Endothelial cell of umbilical vein (primary cell): ENCODE measurements at regions of chr19 and their contacts with region 1.

Region 1: DNA sequence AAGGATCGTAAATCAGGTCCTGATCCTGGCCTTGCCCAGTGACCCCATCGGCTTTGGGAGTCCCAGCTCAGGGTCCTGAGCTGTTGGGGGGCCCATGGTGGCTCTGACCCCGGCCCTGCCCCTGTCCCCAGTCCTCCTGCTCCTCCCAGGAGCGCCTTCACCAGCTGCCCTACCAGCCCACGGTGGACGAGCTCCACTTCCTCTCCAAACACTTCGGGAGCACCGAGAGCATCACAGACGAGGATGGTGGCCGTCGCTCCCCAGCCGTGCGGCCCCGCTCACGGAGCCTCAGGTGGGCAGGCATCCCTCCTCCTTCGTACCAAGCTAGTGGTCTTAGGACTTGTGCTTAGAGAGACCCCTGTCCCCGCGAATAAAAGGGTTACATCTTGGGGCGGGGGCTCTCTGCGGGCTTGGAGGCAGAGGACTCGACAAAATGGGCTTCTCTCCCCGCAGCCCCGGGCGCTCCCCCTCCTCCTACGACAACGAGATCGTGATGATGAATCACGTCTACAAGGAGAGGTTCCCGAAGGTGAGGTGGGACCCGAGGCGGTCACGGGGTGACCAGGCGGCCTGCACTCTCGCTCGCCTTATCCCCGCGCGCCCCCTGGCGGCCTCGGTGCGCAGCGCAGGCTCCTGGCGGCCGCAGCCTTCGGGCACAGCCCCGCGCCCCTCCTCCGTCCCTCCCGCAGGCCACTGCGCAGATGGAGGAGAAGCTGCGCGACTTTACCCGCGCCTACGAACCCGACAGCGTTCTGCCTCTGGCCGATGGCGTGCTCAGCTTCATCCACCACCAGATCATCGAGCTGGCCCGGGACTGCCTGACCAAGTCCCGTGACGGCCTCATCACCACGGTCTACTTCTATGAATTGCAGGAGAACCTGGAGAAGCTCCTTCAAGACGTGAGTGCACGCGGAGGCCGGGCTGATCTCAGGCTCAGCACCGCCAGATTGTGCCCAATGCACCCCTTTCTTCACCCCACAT is 9.1 kb downstream of the MAST1 start:
- DNase-seq: peak; percentile 72
- H3K4me3 ChIP-seq: no peak overlapping the region
- H3K27ac ChIP-seq: no peak overlapping the region
- H3K4me1 ChIP-seq: peaks cover 2% of the 10 kb centered on the region
- H3K27me3 ChIP-seq: no peaks in the 10 kb centered on the region
- CTCF ChIP-seq: peak; percentile 95 to 100
- POLR2A ChIP-seq: no peak

Region 2: DNA sequence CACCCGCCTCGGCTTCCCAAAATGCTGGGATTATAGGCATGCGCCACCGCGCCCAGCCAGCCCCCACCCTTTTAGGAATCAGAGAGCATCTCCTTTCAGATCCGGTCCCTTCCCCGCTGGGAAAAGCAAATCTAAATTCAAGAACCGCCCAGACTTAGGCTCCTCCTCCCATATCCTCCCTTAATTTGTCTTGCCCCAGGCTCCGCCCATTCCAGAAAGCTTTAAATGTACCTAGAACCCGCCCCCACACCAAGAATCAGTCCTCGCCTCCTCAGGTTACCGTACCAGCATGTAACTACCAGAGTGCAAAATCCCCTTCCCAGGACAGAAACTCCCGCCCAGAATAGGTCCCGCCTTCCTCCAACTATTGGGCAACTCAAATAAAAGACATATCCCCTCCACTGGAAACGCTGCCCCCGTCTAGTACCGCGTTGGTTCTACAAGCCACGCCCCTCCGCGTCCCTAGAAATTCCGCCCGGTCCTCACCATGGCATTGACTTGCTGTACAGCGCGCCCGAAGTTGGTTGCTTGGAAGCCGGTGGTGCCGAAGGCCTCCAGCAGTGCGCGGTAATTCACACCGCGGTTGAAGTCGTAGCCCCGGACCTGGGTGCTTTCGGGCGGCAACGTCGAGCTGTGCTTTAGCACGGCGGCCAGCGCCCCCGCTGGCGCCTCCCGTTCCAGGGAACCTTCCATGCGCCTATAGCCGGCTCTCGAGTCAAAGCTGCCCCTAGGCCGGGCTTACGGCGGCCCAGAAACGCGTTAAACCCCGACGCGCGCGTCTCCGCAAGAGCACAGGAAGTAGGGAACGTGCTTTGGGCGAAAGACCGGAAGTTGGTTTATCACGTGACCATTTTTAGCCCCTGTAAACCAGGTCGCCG is 166.1 kb before region 1 on chr19 and contains the start of gene DHPS:
- CTCF ChIA-PET with region 1: interaction called, 38 read pairs
- POLR2A ChIA-PET with region 1: no interaction called
- dilution Hi-C with region 1: no loop called
- intact Hi-C with region 1: loop called (anchors 1 kb)
- DNase-seq: peak; percentile 95
- H3K4me3 ChIP-seq: peak within 1 kb of the TSS; percentile 15 to 77 (median 54)
- H3K27ac ChIP-seq: peak within 1 kb of the TSS; percentile 80
- H3K4me1 ChIP-seq: no peaks in the 10 kb centered on the region
- H3K27me3 ChIP-seq: no peaks in the 10 kb centered on the region
- CTCF ChIP-seq: peak in 1 of 2 donors; percentile 18
- POLR2A ChIP-seq: peak; percentile 70
- total RNA-seq, gene DHPS: 68.4 and 77.4 TPM in 2 replicates

Region 3: DNA sequence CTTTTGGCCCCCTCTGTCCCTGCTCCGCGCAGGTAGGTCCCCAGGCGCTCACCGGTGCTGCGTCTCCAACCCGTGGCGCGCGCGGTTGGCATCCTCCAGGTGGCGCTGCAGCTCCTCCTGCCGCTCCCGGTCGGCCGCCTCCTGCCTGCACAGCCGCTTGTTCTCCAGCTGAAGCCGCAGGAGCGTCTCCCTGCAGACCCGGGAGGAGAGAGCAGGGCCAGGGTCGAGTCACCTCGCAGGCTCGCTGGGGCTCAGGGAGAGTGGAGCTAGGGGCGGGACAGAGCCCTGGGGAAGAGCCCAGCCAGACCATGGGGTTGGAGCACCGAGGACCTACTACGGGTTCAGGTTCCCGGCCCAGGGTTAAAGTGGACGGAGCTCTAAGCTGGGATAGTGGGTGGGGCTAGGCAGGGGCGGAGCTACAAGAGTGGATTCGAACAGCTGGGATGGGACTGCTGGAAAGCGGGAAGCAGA is 81.4 kb before region 1 on chr19:
- CTCF ChIA-PET with region 1: interaction called, 481 read pairs
- POLR2A ChIA-PET with region 1: interaction called, 3 read pairs
- dilution Hi-C with region 1: no loop called
- intact Hi-C with region 1: loop called (anchors 1 kb)
- DNase-seq: peak; percentile 88
- H3K4me3 ChIP-seq: peak overlapping the region in 2 of 3 experiments; percentile 34 to 44
- H3K27ac ChIP-seq: no peak overlapping the region
- H3K4me1 ChIP-seq: no peaks in the 10 kb centered on the region
- H3K27me3 ChIP-seq: no peaks in the 10 kb centered on the region
- CTCF ChIP-seq: peak; percentile 32 to 95
- POLR2A ChIP-seq: no peak

Region 4: DNA sequence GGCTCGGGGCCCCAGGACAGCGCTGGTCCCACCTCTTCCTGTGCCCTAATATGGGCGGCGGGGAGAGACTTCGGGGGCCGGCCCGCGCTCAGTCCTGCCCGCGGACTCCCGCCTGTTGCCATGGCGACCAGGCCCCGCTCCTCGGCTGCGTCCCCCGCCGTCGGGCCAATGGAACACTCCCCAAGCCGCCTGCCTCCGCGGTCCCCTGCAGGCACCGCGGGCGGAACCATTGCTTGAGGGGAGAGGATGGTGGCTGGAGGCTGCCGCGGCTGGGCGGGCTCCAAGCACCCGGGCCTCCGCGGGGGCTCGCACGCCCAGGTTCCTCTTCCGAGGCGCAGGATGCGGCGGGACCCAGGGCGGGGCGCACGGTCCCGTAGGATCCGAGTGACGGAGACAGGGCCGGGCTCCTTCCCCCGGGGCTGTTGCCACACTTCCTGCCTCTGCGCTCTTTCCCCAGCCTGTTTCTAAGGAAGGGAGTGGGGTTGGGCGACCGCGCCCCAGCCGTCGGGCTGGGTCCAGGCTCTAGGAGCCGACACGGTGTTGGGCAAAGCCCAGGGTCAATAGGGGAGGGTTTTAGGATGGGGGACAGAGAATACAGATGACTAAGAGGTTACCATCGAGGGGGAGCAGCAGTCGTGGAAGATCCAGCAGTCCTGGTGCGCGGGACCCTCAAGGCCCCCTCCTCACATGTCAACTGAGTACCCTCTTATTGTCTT is 57.4 kb before region 1 on chr19:
- CTCF ChIA-PET with region 1: interaction called, 30 read pairs
- POLR2A ChIA-PET with region 1: no interaction called
- dilution Hi-C with region 1: no loop called
- intact Hi-C with region 1: no loop called
- DNase-seq: peak; percentile 91
- H3K4me3 ChIP-seq: peak overlapping the region; percentile 16 to 44 (median 37)
- H3K27ac ChIP-seq: peak overlapping the region; percentile 65
- H3K4me1 ChIP-seq: peaks cover 35% of the 10 kb centered on the region
- H3K27me3 ChIP-seq: no peaks in the 10 kb centered on the region
- CTCF ChIP-seq: no peak
- POLR2A ChIP-seq: no peak

Region 5: DNA sequence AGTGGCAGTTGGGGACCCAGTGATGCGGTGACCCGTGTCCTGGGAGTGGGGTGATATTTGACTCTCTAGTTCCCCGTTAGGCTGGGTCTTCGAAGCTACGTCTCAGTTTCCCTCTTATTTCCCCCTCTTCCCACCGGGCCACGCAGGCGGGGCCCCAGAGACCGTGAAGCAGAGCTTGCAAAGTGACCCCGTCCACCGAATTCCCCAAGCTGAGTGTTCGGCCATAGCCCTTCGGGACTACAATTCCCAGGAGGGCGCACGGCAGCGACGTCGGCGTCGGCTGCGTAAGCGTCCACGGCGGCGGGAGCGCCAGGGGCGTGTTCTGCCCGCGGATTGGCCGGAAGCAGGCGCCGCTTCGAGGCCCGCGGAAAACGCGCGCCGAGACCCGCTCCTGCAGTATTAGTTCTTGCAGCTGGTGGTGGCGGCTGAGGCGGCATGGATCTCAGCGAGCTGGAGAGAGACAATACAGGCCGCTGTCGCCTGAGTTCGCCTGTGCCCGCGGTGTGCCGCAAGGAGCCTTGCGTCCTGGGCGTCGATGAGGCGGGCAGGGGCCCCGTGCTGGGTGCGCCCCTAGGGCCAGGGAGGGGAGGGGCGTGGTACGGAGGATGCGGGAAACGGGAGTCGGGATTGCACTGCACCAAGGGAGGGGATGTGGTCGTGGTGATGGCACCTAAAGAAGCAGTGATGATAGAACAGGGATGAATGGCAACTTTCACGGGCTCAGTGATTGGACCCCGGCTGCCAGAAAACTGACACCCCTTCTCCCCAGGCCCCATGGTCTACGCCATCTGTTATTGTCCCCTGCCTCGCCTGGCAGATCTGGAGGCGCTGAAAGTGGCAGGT is 41.0 kb before region 1 on chr19 and contains the start of gene RNASEH2A:
- CTCF ChIA-PET with region 1: interaction called, 30 read pairs
- POLR2A ChIA-PET with region 1: no interaction called
- dilution Hi-C with region 1: no loop called
- intact Hi-C with region 1: loop called (anchors 2 kb)
- DNase-seq: peak; percentile 88
- H3K4me3 ChIP-seq: peak within 1 kb of the TSS; percentile 21 to 48 (median 44)
- H3K27ac ChIP-seq: no peak within 1 kb of the TSS
- H3K4me1 ChIP-seq: peaks cover 15% of the 10 kb centered on the region
- H3K27me3 ChIP-seq: no peaks in the 10 kb centered on the region
- CTCF ChIP-seq: no peak
- POLR2A ChIP-seq: peak; percentile 73
- total RNA-seq, gene RNASEH2A: 25.6 and 28.5 TPM in 2 replicates

Region 6: DNA sequence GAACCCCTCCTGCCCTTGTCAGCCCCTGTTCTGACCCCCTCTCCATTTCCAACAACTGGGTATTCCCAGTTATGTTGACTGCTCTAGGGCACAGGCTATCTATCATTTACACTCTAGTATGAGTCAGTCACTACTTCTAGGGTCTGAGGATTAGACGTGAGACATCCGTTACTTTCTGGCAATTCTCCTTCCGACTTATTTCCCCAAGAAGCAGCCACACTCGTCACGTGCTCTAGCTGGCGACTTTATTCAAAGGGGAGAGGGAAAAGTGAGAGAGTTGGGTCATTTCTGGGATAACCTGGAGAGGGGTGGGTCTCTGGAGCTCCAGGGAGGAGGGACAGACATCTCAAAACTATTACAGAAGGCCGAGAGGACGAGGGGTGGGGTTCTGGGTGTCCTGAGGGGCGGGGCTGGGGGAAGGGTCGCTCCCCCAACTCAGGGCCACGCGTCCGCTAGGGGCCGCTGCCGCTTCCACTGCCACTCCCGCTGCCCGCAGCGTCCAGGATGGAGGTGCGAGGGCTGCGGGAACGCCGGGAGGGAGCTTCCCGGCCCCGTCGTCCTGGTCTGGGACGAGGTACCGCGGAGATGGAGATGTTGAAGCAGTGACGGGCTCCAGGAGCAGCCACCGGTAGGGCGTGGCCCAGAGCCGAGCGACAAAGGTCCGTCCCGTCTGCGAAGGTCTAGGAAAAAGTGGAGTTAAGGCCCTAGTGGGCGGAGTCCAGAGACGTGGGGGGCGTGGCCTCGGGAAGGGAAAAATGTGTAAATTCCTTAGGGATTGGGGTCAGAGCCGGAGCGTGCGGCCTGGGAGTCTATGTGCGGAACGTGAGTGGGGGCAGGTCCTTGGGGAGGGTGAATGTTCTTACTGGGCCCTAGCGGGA is 22.0 kb before region 1 on chr19:
- CTCF ChIA-PET with region 1: interaction called, 19 read pairs
- POLR2A ChIA-PET with region 1: no interaction called
- dilution Hi-C with region 1: no loop called
- intact Hi-C with region 1: no loop called
- DNase-seq: peak; percentile 43
- H3K4me3 ChIP-seq: no peak overlapping the region
- H3K27ac ChIP-seq: no peak overlapping the region
- H3K4me1 ChIP-seq: no peaks in the 10 kb centered on the region
- H3K27me3 ChIP-seq: no peaks in the 10 kb centered on the region
- CTCF ChIP-seq: peak; percentile 39 to 66
- POLR2A ChIP-seq: no peak

Region 7: DNA sequence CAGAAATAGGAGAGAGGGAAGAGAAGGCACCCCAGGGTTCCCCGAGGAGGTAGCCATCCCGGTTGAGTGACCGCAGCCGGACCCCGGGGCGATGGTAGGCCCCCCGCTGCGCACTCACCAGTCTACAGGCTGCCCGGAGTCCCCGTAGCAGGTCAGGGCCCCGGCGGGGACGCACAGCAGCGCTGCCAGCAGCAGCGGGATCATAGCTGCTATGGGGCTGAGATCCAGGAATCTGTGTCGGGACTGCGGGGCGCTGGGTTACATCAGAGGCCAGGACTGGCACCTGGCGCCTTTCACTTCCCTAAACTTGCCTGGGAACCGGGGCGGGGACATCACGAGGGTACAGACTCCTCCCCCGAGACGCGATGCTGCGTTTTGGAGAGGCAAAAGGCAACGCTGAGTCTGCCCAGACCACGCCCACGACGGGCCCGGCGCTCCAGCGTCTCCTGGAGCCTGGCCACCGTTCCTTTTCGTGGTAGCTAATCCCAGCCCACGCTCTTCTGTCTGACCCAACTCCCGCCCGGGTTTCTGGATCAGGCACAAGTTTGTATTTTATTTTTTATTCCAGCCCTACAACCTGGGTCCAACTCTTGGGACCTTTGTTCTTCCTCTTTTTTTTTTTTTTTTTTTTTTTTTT is 33.8 kb after region 1 on chr19 and contains the start of gene DNASE2:
- CTCF ChIA-PET with region 1: interaction called, 22 read pairs
- POLR2A ChIA-PET with region 1: no interaction called
- dilution Hi-C with region 1: no loop called
- intact Hi-C with region 1: no loop called
- DNase-seq: peak; percentile 82
- H3K4me3 ChIP-seq: peak within 1 kb of the TSS; percentile 25 to 78 (median 49)
- H3K27ac ChIP-seq: peak within 1 kb of the TSS; percentile 49
- H3K4me1 ChIP-seq: peaks cover 4% of the 10 kb centered on the region
- H3K27me3 ChIP-seq: peaks cover 9 to 20% of the 10 kb centered on the region in 2 experiments
- CTCF ChIP-seq: no peak
- POLR2A ChIP-seq: peak; percentile 36
- total RNA-seq, gene DNASE2: 31.3 and 34.8 TPM in 2 replicates